Heart right ventricle (tissue), 16 donors: ENCODE measurements at regions of chr6 and their contacts with region 1.

Region 1: DNA sequence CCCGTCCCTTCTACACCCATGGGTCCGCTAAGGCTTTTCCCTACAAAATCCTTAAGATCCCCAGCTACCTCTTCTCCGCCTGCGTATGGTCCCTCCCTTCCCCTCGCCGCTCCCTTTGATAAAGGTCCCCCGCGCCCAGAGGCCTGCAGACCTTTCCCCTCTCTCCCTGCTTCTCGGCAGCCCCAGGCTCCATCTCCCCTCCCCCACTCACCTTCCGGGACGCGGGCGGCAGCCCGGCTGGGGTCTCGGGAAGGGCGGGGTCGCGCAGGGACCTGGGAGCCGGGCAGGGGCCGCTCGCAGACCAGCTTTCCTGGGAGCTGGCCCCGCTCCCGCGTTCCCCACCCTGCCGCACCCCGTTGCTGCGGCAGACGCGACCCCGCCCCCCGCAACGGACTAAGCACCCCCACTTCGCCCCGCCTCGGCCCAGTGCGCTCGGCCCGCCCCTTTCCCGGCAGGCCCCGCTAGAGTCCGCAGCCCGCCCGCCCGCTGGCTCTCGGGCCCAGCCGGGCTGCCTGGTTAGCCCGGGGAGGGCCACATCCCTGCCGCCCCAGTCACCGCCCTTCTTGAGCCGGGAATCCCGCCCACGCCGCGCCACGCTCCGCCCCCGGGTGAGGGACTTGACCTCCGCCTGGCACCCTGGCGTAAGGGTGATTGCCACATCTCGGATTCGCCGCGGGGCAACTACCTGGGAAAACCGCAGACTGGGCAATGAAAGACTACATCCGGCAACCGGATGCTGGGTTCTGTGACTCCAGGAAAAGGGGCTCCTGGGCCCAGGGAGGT is at the start of gene FLOT1:
- DNase-seq: peak; percentile 96 to 98
- ATAC-seq: peak; percentile 83 to 94 (median 90)
- H3K4me3 ChIP-seq: peak within 1 kb of the TSS; percentile 63 to 95 (median 82)
- H3K27ac ChIP-seq: peak within 1 kb of the TSS; percentile 91 to 100 (median 96)
- H3K4me1 ChIP-seq: peaks cover 11 to 63% (median 52%) of the 10 kb centered on the region in 9 donors
- H3K27me3 ChIP-seq: no peaks in the 10 kb centered on the region
- CTCF ChIP-seq: peak in 1 of 9 donors; percentile 18
- total RNA-seq, gene FLOT1: 158 to 280 (median 184) TPM

Region 2: DNA sequence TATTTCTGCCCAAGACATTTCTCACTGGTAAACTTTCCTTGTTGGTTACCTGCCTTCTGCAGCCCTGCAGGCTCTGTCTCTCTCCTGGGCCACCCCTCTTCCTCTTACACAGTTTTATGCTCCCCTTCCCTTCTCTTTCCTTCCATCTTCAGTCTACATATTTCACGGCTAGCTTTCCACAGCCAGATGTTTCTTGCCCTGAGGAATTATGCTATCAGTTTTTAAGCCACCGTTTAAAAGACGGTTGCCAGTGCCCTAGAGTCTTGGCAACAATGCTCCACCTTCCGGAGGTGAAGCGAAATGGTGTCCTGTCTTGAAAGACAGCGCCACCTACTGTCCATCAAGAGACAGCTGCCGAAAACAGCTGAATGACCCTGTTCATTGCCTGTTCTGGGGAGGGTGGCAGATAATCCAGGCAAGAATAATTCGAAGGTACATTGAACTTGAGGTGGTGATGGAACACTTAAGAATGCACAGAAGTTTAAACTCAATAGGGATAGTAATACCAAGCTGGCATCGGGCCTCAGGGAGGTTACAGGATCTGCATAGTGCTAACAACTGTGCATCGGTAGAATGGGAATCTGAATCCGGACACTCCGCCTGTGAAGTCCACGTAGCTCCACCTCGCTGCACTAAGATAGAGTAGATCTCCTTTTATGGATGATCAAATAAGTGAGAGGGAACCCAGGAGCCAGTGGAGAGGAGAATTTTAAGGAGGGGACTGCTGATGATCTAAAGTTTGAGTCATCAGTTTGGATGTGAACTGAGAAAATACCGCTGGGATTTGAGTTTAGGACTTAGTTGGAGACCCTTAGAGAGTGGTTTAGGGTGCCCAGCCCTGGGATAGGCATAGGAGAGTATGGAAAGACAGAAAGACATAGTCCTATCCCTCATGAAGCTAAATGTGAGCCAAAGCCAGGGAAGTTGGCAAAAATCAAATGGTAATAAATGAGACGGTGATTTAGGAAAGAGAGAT is 611.3 kb before region 1 on chr6:
- intact Hi-C with region 1: no loop called
- DNase-seq: peak in 1 of 2 donors; percentile 71
- ATAC-seq: peak; percentile 65 to 91 (median 85)
- H3K4me3 ChIP-seq: no peak overlapping the region
- H3K27ac ChIP-seq: no peak overlapping the region
- H3K4me1 ChIP-seq: peaks cover 0 to 17% (median 10%) of the 10 kb centered on the region in 9 donors
- H3K27me3 ChIP-seq: peaks cover 10 to 97% (median 83%) of the 10 kb centered on the region in 7 donors
- CTCF ChIP-seq: peak; percentile 83 to 100 (median 97)

Region 3: GRCh38 chr6:30616811-30617564 is 125.5 kb before region 1 on chr6 and contains the start of gene PPP1R10:
- intact Hi-C with region 1: loop called in 1 of 10 experiments (anchors 5 kb)
- DNase-seq: peak; percentile 97 to 100
- ATAC-seq: peak; percentile 89 to 94 (median 92)
- H3K4me3 ChIP-seq: peak within 1 kb of the TSS; percentile 57 to 94 (median 76)
- H3K27ac ChIP-seq: peak within 1 kb of the TSS; percentile 86 to 98 (median 95)
- H3K4me1 ChIP-seq: peaks cover 12 to 44% (median 40%) of the 10 kb centered on the region in 9 donors
- H3K27me3 ChIP-seq: no peaks in the 10 kb centered on the region
- CTCF ChIP-seq: no peak
- total RNA-seq, gene PPP1R10: 24.9 to 51.1 (median 33.1) TPM

Region 4: GRCh38 chr6:30781743-30782424 is 39.4 kb after region 1 on chr6:
- intact Hi-C with region 1: loop called in 3 of 10 experiments (anchors 2 to 5 kb)
- DNase-seq: peak; percentile 93 to 97
- ATAC-seq: peak; percentile 89 to 92 (median 91)
- H3K4me3 ChIP-seq: peak overlapping the region in 6 of 10 donors; percentile 2 to 33 (median 20)
- H3K27ac ChIP-seq: peak overlapping the region; percentile 74 to 97 (median 94)
- H3K4me1 ChIP-seq: peaks cover 25 to 100% (median 51%) of the 10 kb centered on the region in 9 donors
- H3K27me3 ChIP-seq: no peaks in the 10 kb centered on the region
- CTCF ChIP-seq: no peak

Region 5: GRCh38 chr6:30821862-30822782 is 79.6 kb after region 1 on chr6:
- intact Hi-C with region 1: loop called (anchors 2 to 10 kb)
- DNase-seq: no peak
- ATAC-seq: peak in 2 of 8 donors; percentile 30 to 37
- H3K4me3 ChIP-seq: no peak overlapping the region
- H3K27ac ChIP-seq: peak overlapping the region in 6 of 10 donors; percentile 13 to 81 (median 51)
- H3K4me1 ChIP-seq: peaks cover 6 to 61% (median 23%) of the 10 kb centered on the region in 9 donors
- H3K27me3 ChIP-seq: no peaks in the 10 kb centered on the region
- CTCF ChIP-seq: peak in 8 of 9 donors; percentile 27 to 67 (median 57)

Region 6: GRCh38 chr6:30877419-30878371 is 135.2 kb after region 1 on chr6:
- intact Hi-C with region 1: loop called in 6 of 10 experiments (anchors 5 to 10 kb)
- DNase-seq: peak; percentile 86 to 92
- ATAC-seq: peak; percentile 87 to 92 (median 89)
- H3K4me3 ChIP-seq: peak overlapping the region in 9 of 10 donors; percentile 14 to 49 (median 40)
- H3K27ac ChIP-seq: peak overlapping the region in 9 of 10 donors; percentile 3 to 86 (median 78)
- H3K4me1 ChIP-seq: peaks cover 9 to 33% (median 18%) of the 10 kb centered on the region in 9 donors
- H3K27me3 ChIP-seq: no peaks in the 10 kb centered on the region
- CTCF ChIP-seq: peak; percentile 71 to 95 (median 88)

Region 7: GRCh38 chr6:30883685-30884520 is 141.4 kb after region 1 on chr6 and contains the start of gene DDR1:
- intact Hi-C with region 1: loop called in 7 of 10 experiments (anchors 5 to 10 kb)
- DNase-seq: peak; percentile 73 to 76
- ATAC-seq: peak; percentile 63 to 89 (median 73)
- H3K4me3 ChIP-seq: peak within 1 kb of the TSS; percentile 53 to 96 (median 74)
- H3K27ac ChIP-seq: peak within 1 kb of the TSS; percentile 43 to 90 (median 84)
- H3K4me1 ChIP-seq: peaks cover 13 to 58% (median 36%) of the 10 kb centered on the region in 9 donors
- H3K27me3 ChIP-seq: peaks cover 0 to 22% (median 0%) of the 10 kb centered on the region in 7 donors
- CTCF ChIP-seq: no peak
- total RNA-seq, gene DDR1: 15.5 to 49.2 (median 26.9) TPM

Region 8: DNA sequence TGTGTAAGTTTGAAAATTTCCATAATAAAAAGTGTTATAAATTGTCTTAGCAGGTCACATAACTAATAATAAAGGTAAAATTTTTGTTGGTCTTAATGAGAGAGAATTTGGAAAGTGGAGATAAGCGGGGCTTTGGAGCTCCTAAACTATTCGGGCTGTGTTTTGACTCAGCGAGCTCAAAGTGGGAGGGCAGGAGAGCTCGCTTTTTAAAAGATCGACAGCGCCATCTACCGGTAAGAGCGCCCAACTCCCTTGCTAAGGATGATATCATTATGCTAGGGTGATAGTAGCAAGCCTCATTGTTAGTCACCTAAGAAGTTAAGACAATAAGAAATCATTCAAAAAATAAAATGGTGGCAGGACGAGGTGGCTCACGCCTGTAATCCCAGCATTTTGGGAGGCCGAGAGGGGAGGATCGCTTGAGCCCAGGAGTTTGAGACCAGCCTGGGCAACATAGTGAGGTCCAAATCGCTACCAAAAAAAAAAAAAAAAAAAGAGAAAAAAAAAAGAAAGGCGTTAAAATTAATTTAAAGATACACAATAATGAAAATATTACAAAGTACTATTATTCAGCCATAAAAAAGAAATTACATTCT is 345.1 kb after region 1 on chr6:
- intact Hi-C with region 1: loop called in 1 of 10 experiments (anchors 10 kb)
- DNase-seq: peak; percentile 83 to 85
- ATAC-seq: peak; percentile 84 to 97 (median 94)
- H3K4me3 ChIP-seq: no peak overlapping the region
- H3K27ac ChIP-seq: peak overlapping the region in 1 of 10 donors; percentile 2
- H3K4me1 ChIP-seq: peaks cover 0 to 19% (median 8%) of the 10 kb centered on the region in 9 donors
- H3K27me3 ChIP-seq: no peaks in the 10 kb centered on the region
- CTCF ChIP-seq: peak; percentile 73 to 87 (median 81)